CD8-positive, alpha-beta memory T cell (primary cell): ENCODE measurements at regions of chr3 and their contacts with region 1.

Region 1: DNA sequence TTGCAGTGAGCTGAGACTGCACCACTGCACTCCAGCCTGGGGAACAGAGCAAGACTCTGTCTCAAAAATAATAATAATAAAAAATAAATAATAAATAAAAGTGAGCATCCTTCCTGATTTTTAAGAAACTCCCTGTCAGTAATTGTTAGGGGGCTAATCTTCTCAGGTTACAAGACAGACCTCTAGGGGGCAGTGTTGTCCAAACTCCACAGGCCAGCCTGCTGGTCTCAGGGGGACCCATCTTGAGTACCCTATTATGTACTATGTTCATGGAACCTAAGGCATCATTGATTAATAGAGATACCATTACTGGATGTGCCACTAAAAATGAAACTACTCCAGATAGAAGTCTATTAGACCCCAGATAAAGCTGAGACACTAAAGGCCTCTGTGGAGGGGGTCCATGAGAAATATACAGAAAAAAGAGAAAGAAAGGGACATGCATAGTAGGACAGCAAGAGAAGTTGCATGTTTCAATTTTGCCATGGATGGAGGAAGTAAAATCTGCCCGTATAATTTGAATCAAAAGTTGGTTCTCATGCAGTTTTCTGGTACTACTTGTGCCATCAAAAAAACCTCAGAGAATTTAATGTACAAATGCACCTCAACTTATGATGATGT is 85.5 kb upstream of the CDV3 start:
- DNase-seq: peak; percentile 34 to 72 (median 47)
- H3K4me3 ChIP-seq: no peak overlapping the region
- H3K4me3 Mint-ChIP-seq: peak overlapping the region in 1 of 7 donors; percentile 54
- H3K27ac ChIP-seq: no peak overlapping the region
- H3K27ac Mint-ChIP-seq: peak overlapping the region in 6 of 8 donors; percentile 51 to 86 (median 74)
- H3K4me1 ChIP-seq: peaks cover 37% of the 10 kb centered on the region
- H3K4me1 Mint-ChIP-seq: peaks cover 36 to 60% (median 49%) of the 10 kb centered on the region in 3 donors
- H3K27me3 ChIP-seq: no peaks in the 10 kb centered on the region
- H3K27me3 Mint-ChIP-seq: no peaks in the 10 kb centered on the region

Region 2: GRCh38 chr3:133475245-133476010 is 12.6 kb before region 1 on chr3:
- CTCF ChIA-PET with region 1: interaction called, 31 read pairs
- POLR2A ChIA-PET with region 1: no interaction called
- DNase-seq: no peak
- H3K4me3 ChIP-seq: no peak overlapping the region
- H3K4me3 Mint-ChIP-seq: peak overlapping the region in 1 of 7 donors; percentile 67
- H3K27ac ChIP-seq: no peak overlapping the region
- H3K27ac Mint-ChIP-seq: peak overlapping the region in 6 of 8 donors; percentile 14 to 44 (median 24)
- H3K4me1 ChIP-seq: peaks cover 16% of the 10 kb centered on the region
- H3K4me1 Mint-ChIP-seq: peaks cover 11 to 53% (median 36%) of the 10 kb centered on the region in 3 donors
- H3K27me3 ChIP-seq: no peaks in the 10 kb centered on the region
- H3K27me3 Mint-ChIP-seq: no peaks in the 10 kb centered on the region

Region 3: DNA sequence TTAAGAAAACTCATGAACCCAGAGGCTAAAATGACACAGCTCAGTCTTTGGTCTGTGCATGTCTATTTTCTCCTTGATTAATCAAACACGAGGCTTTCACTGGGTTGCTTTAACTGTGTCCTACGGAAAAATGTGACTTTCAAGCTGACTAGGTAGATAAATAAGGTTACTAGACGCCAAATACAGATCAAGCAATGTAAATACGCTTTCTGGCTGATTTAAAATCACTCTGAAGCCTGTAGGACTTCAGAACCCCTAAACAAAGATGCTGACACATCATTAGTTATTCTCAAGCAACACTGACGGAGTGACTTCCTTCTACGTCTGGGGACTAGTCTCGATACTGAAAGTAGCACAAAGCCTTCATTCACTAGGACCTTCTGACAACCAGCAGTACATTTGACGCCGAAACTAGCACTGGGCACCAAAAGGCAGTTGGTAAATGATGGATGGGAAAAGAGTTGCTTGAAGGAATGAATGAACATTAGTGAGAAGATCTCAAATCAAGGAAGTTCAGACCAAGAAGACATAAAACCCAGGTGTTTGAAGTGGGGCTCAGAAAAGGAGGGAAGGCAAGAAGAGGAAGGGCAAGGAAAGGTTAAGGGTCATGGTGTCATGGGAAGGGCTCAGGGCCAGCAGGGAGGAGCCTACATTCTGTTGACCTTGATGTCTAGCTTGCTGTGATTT is 18.3 kb after region 1 on chr3:
- CTCF ChIA-PET with region 1: interaction called, 10 read pairs
- POLR2A ChIA-PET with region 1: interaction called, 4 read pairs
- DNase-seq: peak in 3 of 5 donors; percentile 37 to 52 (median 40)
- H3K4me3 ChIP-seq: peak overlapping the region; percentile 58
- H3K4me3 Mint-ChIP-seq: peak overlapping the region; percentile 37 to 85 (median 78)
- H3K27ac ChIP-seq: no peak overlapping the region
- H3K27ac Mint-ChIP-seq: peak overlapping the region; percentile 48 to 97 (median 94)
- H3K4me1 ChIP-seq: peaks cover 17% of the 10 kb centered on the region
- H3K4me1 Mint-ChIP-seq: peaks cover 13 to 20% (median 15%) of the 10 kb centered on the region in 3 donors
- H3K27me3 ChIP-seq: no peaks in the 10 kb centered on the region
- H3K27me3 Mint-ChIP-seq: peaks cover 0 to 1% of the 10 kb centered on the region in 2 donors

Region 4: GRCh38 chr3:133540896-133541674 is 53.1 kb after region 1 on chr3:
- CTCF ChIA-PET with region 1: no interaction called
- POLR2A ChIA-PET with region 1: no interaction called
- DNase-seq: no peak
- H3K4me3 ChIP-seq: no peak overlapping the region
- H3K4me3 Mint-ChIP-seq: no peak overlapping the region
- H3K27ac ChIP-seq: no peak overlapping the region
- H3K27ac Mint-ChIP-seq: no peak overlapping the region
- H3K4me1 ChIP-seq: no peaks in the 10 kb centered on the region
- H3K4me1 Mint-ChIP-seq: no peaks in the 10 kb centered on the region
- H3K27me3 ChIP-seq: no peaks in the 10 kb centered on the region
- H3K27me3 Mint-ChIP-seq: peaks cover 9% of the 10 kb centered on the region in 2 donors

Region 5: DNA sequence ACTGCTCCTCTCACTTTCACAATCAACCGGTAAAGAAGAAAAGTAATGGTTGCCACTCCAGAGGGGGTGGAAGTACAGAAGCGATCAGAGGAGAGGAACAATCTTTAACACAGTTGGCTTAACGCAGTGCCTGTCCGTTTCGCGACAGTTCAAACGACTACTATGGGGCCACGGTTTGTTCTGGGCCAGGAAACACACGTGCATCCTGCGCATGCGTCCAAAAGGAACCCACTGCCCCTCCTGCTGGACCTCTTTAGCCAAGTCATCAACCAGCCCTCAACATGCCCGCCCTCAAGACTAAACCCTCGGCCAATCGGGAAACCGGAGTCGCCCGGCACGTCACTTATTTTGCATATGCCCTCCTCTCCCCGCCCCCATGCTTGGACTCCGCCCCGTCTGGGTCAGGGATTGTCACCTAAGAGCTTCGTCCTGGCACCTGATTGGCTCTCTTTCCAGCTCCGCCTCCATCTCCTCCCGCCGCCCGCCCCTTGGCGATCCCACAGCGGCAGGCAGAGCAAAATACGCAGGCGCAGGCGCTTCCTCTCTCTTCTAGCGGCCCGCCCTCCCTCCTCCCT is 85.1 kb after region 1 on chr3:
- CTCF ChIA-PET with region 1: interaction called, 29 read pairs
- POLR2A ChIA-PET with region 1: interaction called, 50 read pairs
- DNase-seq: peak; percentile 100
- H3K4me3 ChIP-seq: peak overlapping the region; percentile 48
- H3K4me3 Mint-ChIP-seq: peak overlapping the region; percentile 79 to 94 (median 89)
- H3K27ac ChIP-seq: peak overlapping the region; percentile 79
- H3K27ac Mint-ChIP-seq: peak overlapping the region; percentile 95 to 100 (median 99)
- H3K4me1 ChIP-seq: peaks cover 41% of the 10 kb centered on the region
- H3K4me1 Mint-ChIP-seq: peaks cover 51 to 59% (median 53%) of the 10 kb centered on the region in 3 donors
- H3K27me3 ChIP-seq: no peaks in the 10 kb centered on the region
- H3K27me3 Mint-ChIP-seq: peaks cover 0 to 3% of the 10 kb centered on the region in 2 donors

Region 6: DNA sequence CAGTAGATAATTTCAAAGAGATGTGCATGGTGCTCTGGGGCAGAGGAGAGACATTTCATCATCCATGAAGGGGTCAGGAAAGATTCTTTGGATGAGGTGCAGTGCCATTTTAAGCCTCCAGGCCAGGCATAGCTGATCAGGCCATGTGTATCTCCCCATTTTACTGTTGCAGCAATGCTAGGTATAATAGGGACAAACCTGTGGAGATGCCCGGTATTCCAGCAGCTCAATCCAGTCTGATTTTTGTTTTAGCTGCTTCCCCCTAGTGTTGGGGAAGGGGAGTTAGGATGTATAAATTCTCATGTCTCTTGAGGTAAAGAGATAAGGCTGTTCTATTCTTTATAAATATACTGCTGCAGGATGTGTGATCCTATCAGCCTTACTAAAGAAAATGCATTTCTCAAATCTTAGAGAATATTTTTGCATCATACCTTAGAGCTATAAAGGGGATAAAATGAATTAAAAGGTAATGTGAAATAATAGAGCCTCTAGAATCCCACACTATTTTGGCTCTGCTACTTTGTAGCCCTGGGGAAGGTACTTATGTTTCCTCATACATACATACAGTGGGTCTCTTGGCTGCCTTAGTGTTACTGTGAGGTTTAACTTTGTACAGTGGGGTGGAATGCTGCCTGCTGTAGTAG is 90.6 kb after region 1 on chr3:
- CTCF ChIA-PET with region 1: interaction called, 29 read pairs
- POLR2A ChIA-PET with region 1: interaction called, 50 read pairs
- DNase-seq: no peak
- H3K4me3 ChIP-seq: no peak overlapping the region
- H3K4me3 Mint-ChIP-seq: peak overlapping the region; percentile 41 to 97 (median 67)
- H3K27ac ChIP-seq: no peak overlapping the region
- H3K27ac Mint-ChIP-seq: peak overlapping the region; percentile 4 to 95 (median 81)
- H3K4me1 ChIP-seq: peaks cover 68% of the 10 kb centered on the region
- H3K4me1 Mint-ChIP-seq: peaks cover 72 to 87% (median 85%) of the 10 kb centered on the region in 3 donors
- H3K27me3 ChIP-seq: no peaks in the 10 kb centered on the region
- H3K27me3 Mint-ChIP-seq: no peaks in the 10 kb centered on the region